Caco-2 (cell line): ENCODE measurements at regions of chr20 and their contacts with region 1.

Region 1: GRCh38 chr20:43456809-43457639 is 672 bp upstream of the SRSF6 start:
- DNase-seq: peak; percentile 97 to 99
- H3K4me3 ChIP-seq: peak overlapping the region; percentile 90
- H3K4me3 Mint-ChIP-seq: peak overlapping the region; percentile 75
- H3K27ac Mint-ChIP-seq: peak overlapping the region; percentile 100
- H3K4me1 ChIP-seq: peaks cover 11% of the 10 kb centered on the region
- H3K4me1 Mint-ChIP-seq: peaks cover 24% of the 10 kb centered on the region
- H3K27me3 ChIP-seq: no peaks in the 10 kb centered on the region
- H3K27me3 Mint-ChIP-seq: no peaks in the 10 kb centered on the region
- CTCF ChIP-seq: no peak

Region 2: GRCh38 chr20:43514062-43514999 is 57.3 kb after region 1 on chr20:
- CTCF ChIA-PET with region 1: interaction called, 3 read pairs
- POLR2A ChIA-PET with region 1: interaction called, 10 read pairs
- intact Hi-C with region 1: loop called (anchors 1 kb)
- DNase-seq: peak; percentile 96 to 98
- H3K4me3 ChIP-seq: peak overlapping the region; percentile 46
- H3K4me3 Mint-ChIP-seq: peak overlapping the region; percentile 85
- H3K27ac Mint-ChIP-seq: peak overlapping the region; percentile 12
- H3K4me1 ChIP-seq: no peaks in the 10 kb centered on the region
- H3K4me1 Mint-ChIP-seq: no peaks in the 10 kb centered on the region
- H3K27me3 ChIP-seq: no peaks in the 10 kb centered on the region
- H3K27me3 Mint-ChIP-seq: no peaks in the 10 kb centered on the region
- CTCF ChIP-seq: peak in 1 of 2 experiments; percentile 43

Region 3: GRCh38 chr20:43530321-43531090 is 73.5 kb after region 1 on chr20:
- CTCF ChIA-PET with region 1: no interaction called
- POLR2A ChIA-PET with region 1: interaction called, 10 read pairs
- intact Hi-C with region 1: no loop called
- DNase-seq: peak in 1 of 2 experiments; percentile 71
- H3K4me3 ChIP-seq: no peak overlapping the region
- H3K4me3 Mint-ChIP-seq: no peak overlapping the region
- H3K27ac Mint-ChIP-seq: no peak overlapping the region
- H3K4me1 ChIP-seq: peaks cover 13% of the 10 kb centered on the region; the same call in 1 of the 2 replicates
- H3K4me1 Mint-ChIP-seq: no peaks in the 10 kb centered on the region
- H3K27me3 ChIP-seq: no peaks in the 10 kb centered on the region
- H3K27me3 Mint-ChIP-seq: peaks cover 11% of the 10 kb centered on the region
- CTCF ChIP-seq: no peak

Region 4: GRCh38 chr20:43590392-43591323 is 133.6 kb after region 1 on chr20 and contains the start of gene IFT52:
- CTCF ChIA-PET with region 1: no interaction called
- POLR2A ChIA-PET with region 1: interaction called, 42 read pairs
- intact Hi-C with region 1: loop called (anchors 2 kb)
- DNase-seq: peak; percentile 98
- H3K4me3 ChIP-seq: peak within 1 kb of the TSS; percentile 72
- H3K4me3 Mint-ChIP-seq: peak within 1 kb of the TSS; percentile 86
- H3K27ac Mint-ChIP-seq: peak within 1 kb of the TSS; percentile 90
- H3K4me1 ChIP-seq: no peaks in the 10 kb centered on the region
- H3K4me1 Mint-ChIP-seq: peaks cover 15% of the 10 kb centered on the region
- H3K27me3 ChIP-seq: no peaks in the 10 kb centered on the region
- H3K27me3 Mint-ChIP-seq: no peaks in the 10 kb centered on the region
- CTCF ChIP-seq: peak in 1 of 2 experiments; percentile 17
- total RNA-seq, gene IFT52: 56.1 and 70.5 TPM in 2 replicates